PC-3 (cell line): ENCODE measurements at regions of chr12 and their contacts with region 1.

Region 1: GRCh38 chr12:92570056-92570753 is 132.6 kb upstream of the PLEKHG7 start:
- DNase-seq: peak; percentile 91
- ATAC-seq: peak; percentile 68
- H3K4me3 ChIP-seq: no peak overlapping the region
- H3K27ac ChIP-seq: no peak overlapping the region
- H3K4me1 ChIP-seq: peaks cover 16% of the 10 kb centered on the region
- H3K27me3 ChIP-seq: no peaks in the 10 kb centered on the region
- CTCF ChIP-seq: peak; percentile 91

Region 2: DNA sequence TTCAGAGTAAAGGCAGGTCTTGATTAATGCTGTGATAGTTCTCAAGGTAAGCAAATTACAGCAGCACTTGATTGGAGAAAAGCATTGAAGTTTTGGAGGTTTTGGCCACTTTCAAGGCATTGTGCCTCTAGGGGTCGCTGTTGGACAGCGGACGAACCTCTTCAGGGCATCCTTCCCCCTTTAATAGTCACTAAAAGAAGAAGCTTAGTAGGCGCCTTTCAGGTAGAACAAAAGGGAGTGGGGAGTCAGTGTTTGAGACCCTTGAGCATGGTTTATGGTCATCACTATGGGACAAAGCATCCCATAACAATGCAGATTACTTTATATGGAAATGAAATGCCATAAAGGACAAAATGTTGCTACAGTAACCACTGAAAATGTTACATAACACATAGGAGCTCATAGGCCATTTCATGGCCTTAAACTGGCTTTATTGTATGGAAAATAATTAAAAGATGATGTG is 1188.1 kb before region 1 on chr12:
- CTCF ChIA-PET with region 1: interaction called, 8 read pairs
- POLR2A ChIA-PET with region 1: no interaction called
- intact Hi-C with region 1: loop called (anchors 1 kb)
- DNase-seq: peak; percentile 90
- ATAC-seq: peak; percentile 84
- H3K4me3 ChIP-seq: peak overlapping the region; percentile 49
- H3K27ac ChIP-seq: 0 out of 2 replicates have a peak overlapping the region, but pooled peaks have one; percentile 6
- H3K4me1 ChIP-seq: peaks cover 6% of the 10 kb centered on the region; the same call in 1 of the 2 replicates
- H3K27me3 ChIP-seq: no peaks in the 10 kb centered on the region
- CTCF ChIP-seq: peak; percentile 94

Region 3: DNA sequence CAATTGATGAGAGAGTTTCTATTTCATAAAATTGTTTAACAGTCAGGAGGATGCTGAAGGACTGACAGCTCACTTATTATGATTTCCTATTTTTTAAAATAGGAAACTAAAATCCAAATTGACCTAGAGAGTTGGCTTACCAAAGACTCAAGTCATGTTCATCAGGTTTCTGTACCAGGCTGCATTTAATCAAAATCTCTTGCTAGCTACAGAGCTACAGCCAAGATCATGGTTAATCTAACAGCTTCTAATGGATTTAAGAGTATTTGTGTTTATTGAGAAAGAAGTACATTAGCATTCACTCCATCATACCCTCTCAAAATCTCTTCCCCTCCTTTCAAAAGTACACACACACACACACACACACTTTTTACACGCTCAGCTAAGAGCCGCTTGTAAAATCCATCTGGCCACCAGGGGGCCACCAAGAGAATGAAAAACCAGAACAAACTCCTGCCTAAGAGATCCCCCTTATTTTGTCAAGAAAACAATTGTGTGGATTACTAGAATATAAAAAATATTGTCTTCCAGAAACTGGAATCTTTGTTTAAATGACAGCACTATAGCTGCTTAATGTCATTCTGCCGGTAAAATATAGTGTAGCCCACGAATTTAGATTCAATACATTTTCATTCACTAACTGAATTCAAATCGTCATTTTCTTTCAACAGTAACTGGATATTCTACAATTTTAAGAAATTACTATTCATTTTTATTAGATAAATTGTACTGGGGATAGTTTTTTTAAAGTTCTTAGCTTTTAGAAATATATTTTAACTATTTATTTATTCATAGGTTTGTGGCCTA is 758.5 kb before region 1 on chr12:
- CTCF ChIA-PET with region 1: no interaction called
- POLR2A ChIA-PET with region 1: no interaction called
- intact Hi-C with region 1: loop called (anchors 1 kb)
- DNase-seq: peak; percentile 72
- ATAC-seq: peak; percentile 53
- H3K4me3 ChIP-seq: no peak overlapping the region
- H3K27ac ChIP-seq: no peak overlapping the region
- H3K4me1 ChIP-seq: no peaks in the 10 kb centered on the region
- H3K27me3 ChIP-seq: no peaks in the 10 kb centered on the region
- CTCF ChIP-seq: peak; percentile 93

Region 4: DNA sequence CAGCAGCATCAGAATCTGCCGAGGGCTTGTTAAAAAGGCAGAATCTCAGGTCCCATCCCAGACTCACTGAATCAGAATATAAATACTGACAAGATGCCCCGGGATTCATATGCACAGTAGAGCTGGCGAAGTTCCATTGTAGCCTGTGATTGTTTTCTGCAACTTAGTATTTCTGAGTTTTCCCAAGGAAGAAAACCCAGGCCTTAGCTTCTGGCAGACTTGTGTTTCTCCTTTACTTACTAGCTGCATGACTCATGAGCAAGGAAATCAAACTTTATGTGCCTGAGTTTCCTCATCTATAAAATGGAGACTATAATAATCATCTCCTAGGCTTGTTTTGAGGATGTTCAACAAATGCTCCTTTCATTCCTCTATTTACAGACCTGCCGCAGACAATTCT is 145.9 kb before region 1 on chr12:
- CTCF ChIA-PET with region 1: no interaction called
- POLR2A ChIA-PET with region 1: no interaction called
- intact Hi-C with region 1: loop called (anchors 5 kb)
- DNase-seq: peak; percentile 78
- ATAC-seq: peak; percentile 83
- H3K4me3 ChIP-seq: no peak overlapping the region; the same call in 1 of the 2 replicates
- H3K27ac ChIP-seq: peak overlapping the region; percentile 66
- H3K4me1 ChIP-seq: peaks cover 35% of the 10 kb centered on the region
- H3K27me3 ChIP-seq: no peaks in the 10 kb centered on the region
- CTCF ChIP-seq: no peak

Region 5: GRCh38 chr12:92445253-92446082 is 124.7 kb before region 1 on chr12:
- CTCF ChIA-PET with region 1: no interaction called
- POLR2A ChIA-PET with region 1: no interaction called
- intact Hi-C with region 1: no loop called
- DNase-seq: no peak
- ATAC-seq: no peak
- H3K4me3 ChIP-seq: no peak overlapping the region
- H3K27ac ChIP-seq: no peak overlapping the region
- H3K4me1 ChIP-seq: no peaks in the 10 kb centered on the region
- H3K27me3 ChIP-seq: no peaks in the 10 kb centered on the region
- CTCF ChIP-seq: no peak

Region 6: DNA sequence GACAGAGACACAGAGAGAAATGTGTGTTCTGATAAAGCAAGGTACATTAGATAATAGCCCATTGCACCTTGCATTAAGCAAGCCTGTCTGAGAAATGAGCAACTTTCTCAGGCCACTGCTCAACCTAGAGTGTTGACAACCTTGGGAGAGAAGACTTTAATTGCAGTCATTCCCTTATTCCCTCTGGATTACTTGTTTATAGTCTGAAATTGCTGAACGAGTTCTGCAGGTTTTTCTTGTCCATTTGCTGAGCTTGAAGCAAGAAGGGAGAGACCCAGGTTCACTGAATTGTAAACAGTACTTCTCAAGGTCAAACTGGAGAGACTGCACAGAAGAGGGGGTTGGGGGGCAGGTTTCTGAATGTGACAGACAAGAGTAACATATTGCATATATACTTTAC is 26.8 kb before region 1 on chr12:
- CTCF ChIA-PET with region 1: no interaction called
- POLR2A ChIA-PET with region 1: interaction called, 11 read pairs
- intact Hi-C with region 1: no loop called
- DNase-seq: peak; percentile 79
- ATAC-seq: peak; percentile 38
- H3K4me3 ChIP-seq: no peak overlapping the region
- H3K27ac ChIP-seq: no peak overlapping the region
- H3K4me1 ChIP-seq: peaks cover 36% of the 10 kb centered on the region
- H3K27me3 ChIP-seq: no peaks in the 10 kb centered on the region
- CTCF ChIP-seq: no peak

Region 7: GRCh38 chr12:92649511-92650227 is 79.5 kb after region 1 on chr12:
- CTCF ChIA-PET with region 1: no interaction called
- POLR2A ChIA-PET with region 1: no interaction called
- intact Hi-C with region 1: loop called (anchors 1 kb)
- DNase-seq: peak; percentile 85
- ATAC-seq: peak; percentile 98
- H3K4me3 ChIP-seq: no peak overlapping the region
- H3K27ac ChIP-seq: no peak overlapping the region
- H3K4me1 ChIP-seq: peaks cover 27% of the 10 kb centered on the region
- H3K27me3 ChIP-seq: no peaks in the 10 kb centered on the region
- CTCF ChIP-seq: peak; percentile 91

Region 8: GRCh38 chr12:93060666-93061471 is 490.7 kb after region 1 on chr12:
- CTCF ChIA-PET with region 1: no interaction called
- POLR2A ChIA-PET with region 1: no interaction called
- intact Hi-C with region 1: no loop called
- DNase-seq: no peak
- ATAC-seq: no peak
- H3K4me3 ChIP-seq: no peak overlapping the region
- H3K27ac ChIP-seq: no peak overlapping the region
- H3K4me1 ChIP-seq: no peaks in the 10 kb centered on the region
- H3K27me3 ChIP-seq: no peaks in the 10 kb centered on the region
- CTCF ChIP-seq: no peak